ENCODE measurements at regions of chr12 and their contacts with region 1.

Region 1: GRCh38 chr12:126488806-126489205 is 1423.6 kb downstream of the AACS start:
- DNase-seq: no peak
- ATAC-seq: no peak
- H3K4me3 ChIP-seq: no peak overlapping the region
- H3K27ac ChIP-seq: no peak overlapping the region
- H3K4me1 ChIP-seq: peaks cover 0 to 2% (median 0%) of the 10 kb centered on the region in 9 donors
- H3K27me3 ChIP-seq: no peaks in the 10 kb centered on the region
- CTCF ChIP-seq: no peak

Region 2: DNA sequence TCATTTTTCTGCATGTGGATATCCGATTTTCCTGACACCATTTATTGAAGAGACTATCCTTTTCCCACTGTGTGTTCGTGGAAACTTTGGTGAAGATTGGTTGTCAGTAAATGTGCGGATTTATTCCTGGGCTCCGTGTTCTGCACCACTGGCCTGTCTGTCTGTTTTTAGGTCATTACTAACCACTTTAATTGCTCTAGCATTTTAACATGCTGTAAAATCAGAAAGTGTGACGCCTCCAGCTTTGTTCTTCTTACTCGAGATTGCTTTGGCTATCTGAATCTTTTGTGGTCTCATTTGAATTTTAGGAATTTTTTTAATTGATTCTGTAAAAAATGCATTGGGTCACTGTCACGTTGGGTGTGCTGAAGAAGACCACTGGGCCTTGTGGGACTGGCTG is 35.1 kb after region 1 on chr12:
- intact Hi-C with region 1: no loop called
- DNase-seq: no peak
- ATAC-seq: no peak
- H3K4me3 ChIP-seq: no peak overlapping the region
- H3K27ac ChIP-seq: no peak overlapping the region
- H3K4me1 ChIP-seq: no peaks in the 10 kb centered on the region
- H3K27me3 ChIP-seq: peaks cover 0 to 3% (median 0%) of the 10 kb centered on the region in 7 donors
- CTCF ChIP-seq: no peak

Region 3: GRCh38 chr12:126537961-126538530 is 49.2 kb after region 1 on chr12:
- intact Hi-C with region 1: loop called in 1 of 10 experiments (anchors 5 kb)
- DNase-seq: no peak
- ATAC-seq: no peak
- H3K4me3 ChIP-seq: no peak overlapping the region
- H3K27ac ChIP-seq: no peak overlapping the region
- H3K4me1 ChIP-seq: no peaks in the 10 kb centered on the region
- H3K27me3 ChIP-seq: no peaks in the 10 kb centered on the region
- CTCF ChIP-seq: no peak

Measured in heart right ventricle (tissue), 16 donors.